MCF 10A (cell line): ENCODE measurements at regions of chr3 and their contacts with region 1.

Region 1: GRCh38 chr3:111737706-111738086 is 121.4 kb upstream of the PHLDB2 start:
- DNase-seq: peak; percentile 89
- H3K4me3 Mint-ChIP-seq: no peak overlapping the region
- H3K27ac Mint-ChIP-seq: peak overlapping the region; percentile 58
- H3K4me1 Mint-ChIP-seq: peaks cover 40% of the 10 kb centered on the region
- H3K27me3 Mint-ChIP-seq: no peaks in the 10 kb centered on the region
- CTCF ChIP-seq: no peak

Region 2: GRCh38 chr3:111723293-111724215 is 14.1 kb before region 1 on chr3:
- CTCF ChIA-PET with region 1: interaction called, 26 read pairs
- POLR2A ChIA-PET with region 1: interaction called, 27 read pairs
- intact Hi-C with region 1: no loop called
- DNase-seq: peak; percentile 76
- H3K4me3 Mint-ChIP-seq: no peak overlapping the region
- H3K27ac Mint-ChIP-seq: peak overlapping the region; percentile 86
- H3K4me1 Mint-ChIP-seq: peaks cover 19% of the 10 kb centered on the region
- H3K27me3 Mint-ChIP-seq: no peaks in the 10 kb centered on the region
- CTCF ChIP-seq: no peak

Region 3: DNA sequence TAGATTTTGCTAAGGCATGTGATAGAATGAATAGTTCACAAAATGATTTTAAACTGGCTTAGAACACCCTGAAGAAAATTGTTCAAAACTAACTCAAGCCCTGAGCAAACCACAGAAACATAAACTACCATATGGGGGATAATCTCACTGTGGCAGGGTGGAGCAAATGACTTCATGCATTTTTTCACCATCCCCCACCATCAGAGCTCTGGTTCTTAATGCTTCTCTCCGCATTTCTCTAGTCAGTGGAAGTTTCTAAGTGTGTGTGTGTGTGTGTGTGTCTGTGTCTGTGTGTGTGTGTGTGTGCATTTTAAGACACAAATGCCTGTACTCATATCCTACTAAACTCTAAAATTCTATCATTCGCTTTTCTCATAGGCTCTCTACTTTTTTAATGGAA is 14.3 kb after region 1 on chr3:
- CTCF ChIA-PET with region 1: interaction called, 6 read pairs
- POLR2A ChIA-PET with region 1: interaction called, 21 read pairs
- intact Hi-C with region 1: no loop called
- DNase-seq: no peak
- H3K4me3 Mint-ChIP-seq: no peak overlapping the region
- H3K27ac Mint-ChIP-seq: peak overlapping the region; percentile 42
- H3K4me1 Mint-ChIP-seq: peaks cover 6% of the 10 kb centered on the region
- H3K27me3 Mint-ChIP-seq: no peaks in the 10 kb centered on the region
- CTCF ChIP-seq: no peak

Region 4: GRCh38 chr3:111761309-111761831 is 23.7 kb after region 1 on chr3:
- CTCF ChIA-PET with region 1: interaction called, 9 read pairs
- POLR2A ChIA-PET with region 1: interaction called, 67 read pairs
- intact Hi-C with region 1: no loop called
- DNase-seq: peak; percentile 73
- H3K4me3 Mint-ChIP-seq: peak overlapping the region; percentile 45
- H3K27ac Mint-ChIP-seq: peak overlapping the region; percentile 96
- H3K4me1 Mint-ChIP-seq: peaks cover 30% of the 10 kb centered on the region
- H3K27me3 Mint-ChIP-seq: no peaks in the 10 kb centered on the region
- CTCF ChIP-seq: no peak

Region 5: GRCh38 chr3:111768571-111769100 is 30.9 kb after region 1 on chr3:
- CTCF ChIA-PET with region 1: interaction called, 8 read pairs
- POLR2A ChIA-PET with region 1: interaction called, 67 read pairs
- intact Hi-C with region 1: no loop called
- DNase-seq: peak; percentile 96
- H3K4me3 Mint-ChIP-seq: no peak overlapping the region
- H3K27ac Mint-ChIP-seq: peak overlapping the region; percentile 82
- H3K4me1 Mint-ChIP-seq: peaks cover 38% of the 10 kb centered on the region
- H3K27me3 Mint-ChIP-seq: no peaks in the 10 kb centered on the region
- CTCF ChIP-seq: no peak

Region 6: DNA sequence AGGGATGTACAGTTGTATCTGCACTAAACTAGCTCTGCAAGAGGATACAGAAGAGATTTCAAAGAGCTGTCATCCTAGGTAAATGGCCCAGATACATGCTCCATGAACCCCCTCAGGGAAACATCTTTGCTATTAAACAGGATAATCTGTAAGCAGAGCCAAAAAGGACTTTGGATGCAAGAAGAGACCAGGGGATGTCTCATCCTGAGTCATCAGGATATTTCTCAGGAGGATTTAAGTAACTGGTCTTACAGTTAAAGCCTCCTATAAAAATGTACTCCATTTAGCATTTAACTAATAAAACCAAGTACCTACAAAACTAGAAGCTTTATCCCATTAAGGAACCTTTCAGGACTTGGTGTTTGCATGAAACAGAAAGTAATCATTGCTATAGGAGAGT is 73.2 kb after region 1 on chr3:
- CTCF ChIA-PET with region 1: interaction called, 6 read pairs
- POLR2A ChIA-PET with region 1: interaction called, 135 read pairs
- intact Hi-C with region 1: no loop called
- DNase-seq: peak; percentile 86
- H3K4me3 Mint-ChIP-seq: no peak overlapping the region
- H3K27ac Mint-ChIP-seq: peak overlapping the region; percentile 80
- H3K4me1 Mint-ChIP-seq: peaks cover 43% of the 10 kb centered on the region
- H3K27me3 Mint-ChIP-seq: no peaks in the 10 kb centered on the region
- CTCF ChIP-seq: no peak

Region 7: DNA sequence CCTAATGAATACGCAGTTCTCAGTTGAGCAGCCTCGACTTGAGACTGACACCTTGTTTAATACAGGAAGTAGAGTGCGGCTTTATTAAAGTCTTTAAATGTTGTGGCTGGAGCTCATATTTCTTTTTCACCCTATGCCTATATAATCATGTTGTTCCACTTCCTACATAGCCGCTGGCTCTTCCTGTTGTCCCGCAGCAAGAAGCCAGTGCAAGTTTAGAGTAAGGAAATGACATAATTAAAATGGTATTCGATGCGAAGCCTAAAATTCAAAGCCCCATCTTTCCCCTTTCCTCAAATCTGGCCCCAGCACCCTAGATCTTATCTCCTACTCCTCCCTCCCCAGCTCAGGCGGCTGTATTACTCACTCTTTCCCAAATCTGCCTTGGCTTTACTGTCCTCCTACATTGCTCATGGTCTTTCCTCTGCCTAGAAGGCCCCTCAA is 113.8 kb after region 1 on chr3:
- CTCF ChIA-PET with region 1: no interaction called
- POLR2A ChIA-PET with region 1: interaction called, 21 read pairs
- intact Hi-C with region 1: no loop called
- DNase-seq: peak; percentile 87
- H3K4me3 Mint-ChIP-seq: no peak overlapping the region
- H3K27ac Mint-ChIP-seq: peak overlapping the region; percentile 77
- H3K4me1 Mint-ChIP-seq: peaks cover 37% of the 10 kb centered on the region
- H3K27me3 Mint-ChIP-seq: no peaks in the 10 kb centered on the region
- CTCF ChIP-seq: no peak

Region 8: DNA sequence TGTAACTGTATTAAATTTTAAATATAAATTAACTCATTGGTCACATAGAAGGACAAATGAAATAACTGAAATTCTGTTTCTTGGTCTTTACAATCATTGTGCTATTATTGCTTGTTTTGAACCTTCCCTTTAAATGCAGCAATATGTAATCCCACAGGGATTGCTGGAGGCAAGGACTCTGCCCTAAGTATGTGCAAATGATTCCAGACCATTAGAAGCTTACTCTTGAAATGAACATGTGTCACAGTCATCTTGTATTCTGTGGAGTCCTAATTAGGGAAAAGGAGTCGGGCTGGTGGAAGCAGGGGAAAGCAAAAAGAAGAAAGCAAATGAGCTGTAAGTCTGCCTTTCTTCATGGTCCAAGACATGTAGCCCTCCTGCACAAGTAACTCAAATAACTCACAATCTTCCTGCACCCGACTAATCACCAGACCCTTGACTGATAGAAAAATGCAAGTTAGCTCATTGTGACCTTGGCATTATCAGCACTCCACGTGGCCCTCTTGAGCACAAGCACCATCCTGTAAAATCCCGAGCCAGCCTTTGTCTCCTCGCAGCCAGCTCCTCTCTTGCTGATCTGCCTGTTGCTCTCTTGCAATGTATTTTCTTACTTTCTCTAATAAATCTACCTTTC is 294.5 kb after region 1 on chr3:
- CTCF ChIA-PET with region 1: no interaction called
- POLR2A ChIA-PET with region 1: no interaction called
- intact Hi-C with region 1: no loop called
- DNase-seq: no peak
- H3K4me3 Mint-ChIP-seq: no peak overlapping the region
- H3K27ac Mint-ChIP-seq: no peak overlapping the region
- H3K4me1 Mint-ChIP-seq: no peaks in the 10 kb centered on the region
- H3K27me3 Mint-ChIP-seq: no peaks in the 10 kb centered on the region
- CTCF ChIP-seq: no peak